OCI-LY7 (cell line): ENCODE measurements at regions of chr1 and their contacts with region 1.

Region 1: DNA sequence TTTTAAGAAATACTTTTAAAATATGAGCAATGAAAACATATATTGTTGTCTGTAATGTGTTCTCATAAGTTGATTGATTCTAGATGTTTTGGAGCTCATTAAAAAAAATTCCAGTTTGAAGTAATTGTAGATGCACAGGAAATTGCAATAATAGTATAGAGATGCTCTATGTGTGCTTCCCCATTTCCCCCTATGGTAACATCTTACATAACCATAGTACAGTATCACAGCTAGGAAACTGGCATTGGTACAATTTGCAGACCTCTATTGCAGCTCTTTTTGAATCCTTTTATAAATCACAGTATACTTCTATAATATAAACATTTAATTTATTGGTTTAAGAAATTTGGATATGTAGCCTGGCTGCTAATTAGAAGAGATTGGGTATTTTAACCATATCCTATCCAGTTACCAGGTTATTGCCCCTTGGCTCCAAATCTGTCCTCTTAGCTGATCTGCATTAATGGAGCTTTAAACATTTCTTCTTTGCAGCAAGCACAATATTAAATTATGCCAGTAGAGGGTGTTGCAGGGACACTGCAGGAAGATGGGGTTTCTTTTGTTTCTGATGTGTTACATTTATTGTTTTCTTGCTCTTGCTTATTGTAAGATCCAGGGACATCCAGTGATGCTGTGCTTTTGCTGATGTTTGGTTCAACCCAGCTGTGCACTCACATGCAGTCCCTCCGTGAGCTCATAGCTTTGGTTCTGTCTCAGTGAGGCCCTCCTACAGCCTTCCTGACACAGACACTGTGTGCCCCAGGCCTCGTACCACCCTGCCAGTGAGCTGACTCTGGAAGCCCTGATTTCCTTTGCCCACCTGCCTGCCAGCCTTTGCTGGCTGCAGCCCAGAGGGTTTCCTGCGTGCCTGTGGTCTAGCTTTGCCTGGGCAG is 103.3 kb downstream of the RABGAP1L start:
- DNase-seq: peak; percentile 92
- H3K4me3 ChIP-seq: peak overlapping the region; percentile 20
- H3K27ac ChIP-seq: peak overlapping the region; percentile 82
- H3K4me1 ChIP-seq: peaks cover 70% of the 10 kb centered on the region
- CTCF ChIP-seq: peak; percentile 97

Region 2: DNA sequence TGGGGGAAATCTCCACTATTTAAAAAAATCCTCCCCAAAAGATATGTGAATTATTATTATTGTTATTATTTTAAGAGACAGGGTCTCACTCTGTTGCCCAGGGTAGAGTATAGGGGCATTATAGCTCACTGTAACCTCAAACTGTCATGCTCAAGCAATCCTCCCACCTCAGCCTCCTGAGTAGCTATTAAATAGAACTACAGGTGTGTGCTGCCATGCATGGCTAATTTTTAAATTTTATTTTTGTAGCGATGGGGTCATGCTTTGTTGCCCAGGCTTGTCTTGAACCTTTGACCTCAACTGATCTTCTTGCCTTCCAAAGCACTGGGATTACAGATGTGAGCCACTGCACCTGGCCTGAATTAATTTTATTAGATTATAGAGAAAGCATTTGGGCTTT is 13.5 kb after region 1 on chr1:
- CTCF ChIA-PET with region 1: interaction called, 10 read pairs
- POLR2A ChIA-PET with region 1: interaction called, 27 read pairs
- intact Hi-C with region 1: loop called (anchors 1 kb)
- DNase-seq: peak; percentile 95
- H3K4me3 ChIP-seq: peak overlapping the region; percentile 43
- H3K27ac ChIP-seq: peak overlapping the region; percentile 96
- H3K4me1 ChIP-seq: peaks cover 91% of the 10 kb centered on the region
- CTCF ChIP-seq: no peak

Region 3: DNA sequence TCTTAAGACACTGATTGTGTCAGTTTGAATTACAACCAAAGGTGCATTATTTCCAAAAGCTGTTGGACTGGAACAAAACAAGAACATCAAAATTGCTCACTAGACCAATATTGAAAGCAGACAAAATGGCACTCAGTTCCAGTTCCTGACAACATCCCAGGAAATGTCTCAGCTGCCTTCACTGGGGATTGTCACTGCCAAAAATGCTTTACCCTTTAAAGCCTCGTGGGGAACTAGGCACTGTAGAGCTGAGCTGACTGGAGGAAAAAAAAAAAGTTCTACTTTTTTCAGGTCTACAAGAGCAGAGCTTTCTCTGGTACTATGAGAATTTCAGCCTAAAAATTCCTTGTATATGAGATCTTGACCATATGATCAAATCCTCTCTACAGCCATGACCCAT is 207.1 kb after region 1 on chr1:
- CTCF ChIA-PET with region 1: no interaction called
- POLR2A ChIA-PET with region 1: interaction called, 3 read pairs
- intact Hi-C with region 1: loop called (anchors 5 kb)
- DNase-seq: no peak
- H3K4me3 ChIP-seq: no peak overlapping the region
- H3K27ac ChIP-seq: no peak overlapping the region
- H3K4me1 ChIP-seq: no peaks in the 10 kb centered on the region
- CTCF ChIP-seq: no peak

Region 4: GRCh38 chr1:174743654-174744561 is 481.3 kb after region 1 on chr1:
- CTCF ChIA-PET with region 1: interaction called, 20 read pairs
- POLR2A ChIA-PET with region 1: interaction called, 20 read pairs
- intact Hi-C with region 1: loop called (anchors 1 kb)
- DNase-seq: peak; percentile 73
- H3K4me3 ChIP-seq: no peak overlapping the region
- H3K27ac ChIP-seq: no peak overlapping the region
- H3K4me1 ChIP-seq: peaks cover 43% of the 10 kb centered on the region
- CTCF ChIP-seq: peak; percentile 90

Region 5: GRCh38 chr1:174999216-174999925 is 736.8 kb after region 1 on chr1:
- CTCF ChIA-PET with region 1: no interaction called
- POLR2A ChIA-PET with region 1: interaction called, 3 read pairs
- intact Hi-C with region 1: loop called (anchors 5 kb)
- DNase-seq: peak; percentile 99
- H3K4me3 ChIP-seq: peak overlapping the region; percentile 95
- H3K27ac ChIP-seq: peak overlapping the region; percentile 92
- H3K4me1 ChIP-seq: peaks cover 41% of the 10 kb centered on the region
- CTCF ChIP-seq: no peak